PC-9 (cell line): ENCODE measurements at regions of chr17 and their contacts with region 1.

Region 1: GRCh38 chr17:29347831-29348629 is 42.1 kb upstream of the TAOK1 start:
- DNase-seq: peak; percentile 51 to 75
- H3K4me3 ChIP-seq: no peak overlapping the region
- H3K27ac ChIP-seq: 0 out of 2 replicates have a peak overlapping the region, but pooled peaks have one; percentile 46
- H3K4me1 ChIP-seq: peaks cover 11% of the 10 kb centered on the region
- H3K27me3 ChIP-seq: no peaks in the 10 kb centered on the region
- CTCF ChIP-seq: no peak

Region 2: DNA sequence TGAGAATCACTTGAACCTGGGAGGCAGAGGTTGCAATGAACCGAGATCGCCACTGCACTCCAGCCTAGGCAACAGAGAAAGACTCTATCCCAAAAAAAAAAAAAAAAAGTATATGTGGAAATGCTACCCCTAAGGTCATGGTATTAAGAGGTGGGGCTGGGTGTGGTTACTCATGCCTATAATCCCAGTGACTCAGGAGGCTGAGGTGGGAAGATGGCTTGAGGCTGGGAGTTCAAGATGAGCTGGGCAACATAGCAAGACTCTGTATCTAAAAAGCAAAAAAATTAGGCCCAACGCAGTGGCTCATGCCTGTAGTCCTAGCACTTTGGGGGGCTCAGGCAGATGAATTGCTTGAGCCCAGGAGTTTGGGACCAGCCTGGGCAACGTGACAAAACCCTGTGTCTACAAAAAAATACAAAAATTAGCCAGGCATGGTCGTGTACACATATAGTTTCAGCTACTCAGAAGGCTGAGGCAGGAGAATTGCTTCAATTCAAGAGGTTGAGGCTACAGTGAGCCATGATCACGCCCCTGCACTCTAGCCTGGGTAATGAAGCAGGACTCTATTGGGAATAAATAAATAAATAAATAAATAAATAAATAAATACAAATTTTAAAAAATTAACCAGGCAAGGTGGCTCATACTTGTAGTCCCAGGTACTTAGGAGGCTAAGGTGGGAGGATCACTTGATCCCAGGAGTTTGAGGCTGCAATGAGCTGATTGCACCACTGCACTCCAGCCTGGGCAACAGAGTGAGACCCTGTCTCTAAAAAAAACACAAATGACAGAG is 21.8 kb before region 1 on chr17:
- CTCF ChIA-PET with region 1: no interaction called
- POLR2A ChIA-PET with region 1: interaction called, 10 read pairs
- intact Hi-C with region 1: no loop called
- DNase-seq: no peak
- H3K4me3 ChIP-seq: no peak overlapping the region
- H3K27ac ChIP-seq: no peak overlapping the region
- H3K4me1 ChIP-seq: no peaks in the 10 kb centered on the region
- H3K27me3 ChIP-seq: no peaks in the 10 kb centered on the region
- CTCF ChIP-seq: no peak

Region 3: GRCh38 chr17:29364701-29365100 is 16.7 kb after region 1 on chr17:
- CTCF ChIA-PET with region 1: interaction called, 10 read pairs
- POLR2A ChIA-PET with region 1: no interaction called
- intact Hi-C with region 1: no loop called
- DNase-seq: no peak
- H3K4me3 ChIP-seq: no peak overlapping the region
- H3K27ac ChIP-seq: no peak overlapping the region
- H3K4me1 ChIP-seq: peaks cover 6% of the 10 kb centered on the region
- H3K27me3 ChIP-seq: no peaks in the 10 kb centered on the region
- CTCF ChIP-seq: no peak

Region 4: GRCh38 chr17:29504711-29505110 is 156.7 kb after region 1 on chr17:
- CTCF ChIA-PET with region 1: interaction called, 19 read pairs
- POLR2A ChIA-PET with region 1: no interaction called
- intact Hi-C with region 1: no loop called
- DNase-seq: no peak
- H3K4me3 ChIP-seq: no peak overlapping the region
- H3K27ac ChIP-seq: no peak overlapping the region
- H3K4me1 ChIP-seq: no peaks in the 10 kb centered on the region
- H3K27me3 ChIP-seq: no peaks in the 10 kb centered on the region
- CTCF ChIP-seq: no peak